Caki2 (cell line): ENCODE measurements at regions of chr19 and their contacts with region 1.

Region 1: GRCh38 chr19:5250127-5250659 is 90.4 kb downstream of the PTPRS start:
- DNase-seq: no peak

Region 2: DNA sequence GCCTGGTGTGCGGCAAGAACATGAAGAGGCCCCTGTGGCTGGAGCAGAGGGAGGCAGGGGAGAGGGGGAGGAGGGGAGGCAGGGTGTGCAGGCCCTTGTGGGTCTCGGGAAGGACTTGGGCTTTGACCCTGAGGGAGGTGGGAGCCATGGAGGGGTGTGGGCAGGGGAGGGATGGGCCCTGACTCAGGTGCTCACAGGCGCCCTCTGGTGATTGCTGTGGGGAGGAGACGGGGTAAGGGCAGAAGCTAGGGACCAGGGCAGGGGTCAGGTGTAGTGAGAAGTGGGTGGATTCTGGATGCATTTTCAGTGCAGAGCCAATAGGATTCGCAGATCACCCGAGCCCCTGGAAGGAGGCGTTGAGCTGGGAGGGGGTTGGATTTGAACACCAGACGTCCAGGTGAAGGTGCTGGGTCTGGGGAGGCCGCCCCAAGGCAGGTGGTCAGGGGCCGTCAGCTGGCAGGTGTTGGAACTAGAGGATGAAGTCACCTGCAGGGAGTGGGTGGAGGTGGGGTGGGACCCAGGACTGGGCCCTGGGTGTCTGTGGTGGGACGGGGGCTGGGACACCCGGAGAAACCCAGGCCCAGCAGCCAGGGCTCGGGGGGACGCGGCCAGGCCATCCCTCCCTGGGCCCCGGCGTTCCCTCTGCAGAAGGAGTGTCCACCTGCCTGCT is 95.9 kb before region 1 on chr19:
- in situ Hi-C with region 1: no loop called
- DNase-seq: no peak

Region 3: GRCh38 chr19:5170329-5170745 is 79.9 kb before region 1 on chr19:
- in situ Hi-C with region 1: loop called (anchors 10 kb)
- DNase-seq: no peak

Region 4: GRCh38 chr19:5292822-5293611 is 42.8 kb after region 1 on chr19:
- in situ Hi-C with region 1: no loop called
- DNase-seq: peak; percentile 61

Region 5: GRCh38 chr19:5498830-5499550 is 248.8 kb after region 1 on chr19:
- in situ Hi-C with region 1: no loop called
- DNase-seq: no peak